WTC11 (cell line): ENCODE measurements at regions of chr2 and their contacts with region 1.

Region 1: DNA sequence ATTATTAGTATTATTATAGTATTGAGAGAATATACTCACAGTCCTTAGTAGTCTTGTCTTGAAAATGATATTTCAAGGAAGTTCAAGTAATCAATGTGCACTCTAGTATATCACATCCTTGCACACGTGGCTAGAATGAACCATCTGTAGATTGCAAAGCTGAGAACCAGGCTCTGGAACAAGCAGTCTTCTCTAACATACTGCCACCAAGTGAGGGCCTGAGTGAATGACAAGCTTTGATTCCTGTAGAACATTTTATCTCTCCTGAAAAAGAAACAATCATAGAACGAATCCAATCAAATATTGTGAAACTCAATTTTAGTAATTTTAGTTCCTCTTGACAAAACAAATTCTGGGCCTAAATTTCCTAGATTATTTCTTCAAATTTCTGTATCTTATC is 55.3 kb upstream of the SULT1C3 start:
- DNase-seq: no peak
- ATAC-seq: peak; percentile 48; the same call in 1 of the 2 replicates
- H3K4me3 Mint-ChIP-seq: no peak overlapping the region
- H3K27ac Mint-ChIP-seq: no peak overlapping the region
- H3K4me1 Mint-ChIP-seq: no peaks in the 10 kb centered on the region
- H3K27me3 Mint-ChIP-seq: no peaks in the 10 kb centered on the region; the same call in 1 of the 2 replicates
- CTCF ChIP-seq: no peak

Region 2: GRCh38 chr2:107936433-107937359 is 247.7 kb before region 1 on chr2:
- CTCF ChIA-PET with region 1: interaction called, 39 read pairs
- POLR2A ChIA-PET with region 1: no interaction called
- DNase-seq: peak; percentile 21
- ATAC-seq: no peak
- H3K4me3 Mint-ChIP-seq: no peak overlapping the region
- H3K27ac Mint-ChIP-seq: 0 out of 2 replicates have a peak overlapping the region, but pooled peaks have one; percentile 6
- H3K4me1 Mint-ChIP-seq: peaks cover 10% of the 10 kb centered on the region
- H3K27me3 Mint-ChIP-seq: no peaks in the 10 kb centered on the region
- CTCF ChIP-seq: peak; percentile 55; the same call in 1 of the 2 replicates

Region 3: DNA sequence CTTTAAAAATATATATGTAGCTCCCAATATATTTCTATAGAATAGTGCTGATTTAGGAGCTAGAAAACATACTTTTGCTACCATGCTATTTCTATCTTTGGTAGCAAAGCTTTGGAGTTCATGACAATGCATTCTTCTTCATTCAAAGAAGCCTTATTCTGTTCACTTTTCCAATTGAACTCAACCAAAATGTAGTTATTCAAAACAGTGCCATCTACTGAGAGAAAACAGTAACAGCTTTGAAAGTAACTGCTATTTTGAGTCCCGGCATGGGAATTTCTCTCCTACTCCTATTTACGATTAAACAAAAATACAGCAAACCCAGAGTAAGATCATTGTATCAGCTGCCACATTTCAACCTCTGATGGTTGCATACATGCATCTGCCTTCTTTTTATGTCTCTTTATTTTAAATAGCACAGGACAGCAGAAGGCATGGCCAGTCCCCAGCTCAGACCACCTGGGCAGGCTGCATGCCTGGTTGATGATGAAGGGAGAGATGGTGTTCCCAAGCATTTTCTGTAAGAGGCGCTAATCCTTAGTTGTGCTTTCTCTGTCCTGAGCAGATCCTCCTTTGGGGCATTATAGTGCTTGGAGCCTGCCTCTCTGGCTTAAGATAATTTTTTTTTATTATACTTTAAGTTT is 14.3 kb before region 1 on chr2:
- CTCF ChIA-PET with region 1: interaction called, 10 read pairs
- POLR2A ChIA-PET with region 1: no interaction called
- DNase-seq: no peak
- ATAC-seq: peak; percentile 84
- H3K4me3 Mint-ChIP-seq: no peak overlapping the region
- H3K27ac Mint-ChIP-seq: no peak overlapping the region
- H3K4me1 Mint-ChIP-seq: no peaks in the 10 kb centered on the region
- H3K27me3 Mint-ChIP-seq: no peaks in the 10 kb centered on the region
- CTCF ChIP-seq: 0 out of 2 replicates have a peak, but pooled peaks have one; percentile 15

Region 4: GRCh38 chr2:108194409-108195132 is 10.2 kb after region 1 on chr2:
- CTCF ChIA-PET with region 1: interaction called, 13 read pairs
- POLR2A ChIA-PET with region 1: no interaction called
- DNase-seq: no peak
- ATAC-seq: no peak
- H3K4me3 Mint-ChIP-seq: no peak overlapping the region
- H3K27ac Mint-ChIP-seq: no peak overlapping the region
- H3K4me1 Mint-ChIP-seq: no peaks in the 10 kb centered on the region
- H3K27me3 Mint-ChIP-seq: no peaks in the 10 kb centered on the region
- CTCF ChIP-seq: no peak